BJ (cell line): ENCODE measurements at regions of chr10 and their contacts with region 1.

Region 1: DNA sequence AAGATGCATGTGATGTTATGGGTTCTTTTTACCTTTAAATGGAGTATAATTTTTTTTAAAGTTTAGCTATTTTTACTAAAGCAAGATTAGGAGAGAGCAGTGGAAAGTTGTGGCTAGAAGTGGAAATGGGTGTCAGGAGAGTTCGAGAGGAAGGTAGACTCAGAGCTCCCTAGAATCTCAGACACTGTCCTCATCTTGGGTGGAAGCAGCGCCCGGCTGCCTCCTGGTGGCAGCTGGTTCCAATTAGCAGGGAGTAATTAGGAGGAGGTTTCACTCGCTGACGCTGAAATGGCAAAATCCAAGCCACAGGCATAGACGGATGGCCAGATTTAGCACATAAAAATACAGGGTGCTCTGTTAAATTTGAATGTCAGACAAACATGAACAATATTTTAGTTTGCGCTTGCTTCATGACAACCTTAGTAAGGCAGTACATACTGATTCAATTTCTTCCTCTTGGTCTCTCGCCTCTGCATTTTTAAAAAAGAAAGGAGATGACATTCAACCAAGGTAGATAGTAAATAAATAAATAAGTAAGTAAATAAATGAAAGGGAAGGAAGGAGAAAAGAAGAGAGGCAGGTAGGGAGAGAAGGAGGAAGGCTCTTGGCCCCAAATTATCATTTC is 58.5 kb downstream of the LGI1 start:
- DNase-seq: peak; percentile 22
- H3K4me3 ChIP-seq: no peak overlapping the region
- H3K27me3 ChIP-seq: peaks cover 6% of the 10 kb centered on the region
- CTCF ChIP-seq: peak; percentile 72

Region 2: DNA sequence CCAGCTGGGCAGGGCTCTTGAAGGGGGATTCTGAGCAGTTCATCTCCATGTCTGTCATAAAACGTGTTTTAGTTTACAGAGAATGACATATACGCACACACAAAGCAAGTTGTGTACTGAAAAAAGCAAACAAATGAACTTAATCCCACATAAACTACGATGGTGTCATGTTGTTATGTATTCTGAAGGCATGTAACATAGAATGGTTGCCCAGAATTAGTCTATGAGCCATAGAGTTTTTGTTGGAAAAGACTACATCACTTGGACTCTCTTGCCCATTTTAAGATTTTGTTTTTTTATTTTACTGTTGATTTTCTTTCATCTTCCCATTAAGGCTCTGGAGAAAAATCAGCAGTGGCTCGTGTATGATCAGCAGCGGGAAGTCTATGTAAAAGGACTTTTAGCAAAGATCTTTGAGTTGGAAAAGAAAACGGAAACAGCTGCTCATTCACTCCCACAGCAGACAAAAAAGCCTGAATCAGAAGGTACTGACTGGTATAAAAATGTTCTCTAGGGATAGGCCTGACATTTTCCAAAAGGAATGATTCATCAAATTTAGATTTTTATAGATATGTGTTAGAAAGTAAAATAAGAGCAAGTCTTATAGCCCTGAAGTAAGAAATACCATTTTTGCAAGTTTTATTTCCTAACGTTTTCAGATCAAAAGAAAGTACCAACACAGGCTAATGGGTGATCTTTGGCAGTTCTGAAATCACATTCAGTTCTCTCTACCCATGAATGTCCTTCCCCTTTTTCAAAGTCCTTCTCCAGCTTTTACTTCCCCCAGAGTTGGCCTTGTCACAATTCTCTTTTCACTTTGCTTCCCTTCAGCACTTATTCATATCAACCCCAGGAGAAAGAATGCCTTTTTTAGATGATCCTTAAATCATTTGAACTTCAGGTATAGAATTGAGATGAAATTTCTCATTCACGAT is 300.9 kb before region 1 on chr10:
- CTCF ChIA-PET with region 1: no interaction called
- POLR2A ChIA-PET with region 1: no interaction called
- DNase-seq: no peak
- H3K4me3 ChIP-seq: no peak overlapping the region
- H3K27me3 ChIP-seq: no peaks in the 10 kb centered on the region
- CTCF ChIP-seq: no peak

Region 3: DNA sequence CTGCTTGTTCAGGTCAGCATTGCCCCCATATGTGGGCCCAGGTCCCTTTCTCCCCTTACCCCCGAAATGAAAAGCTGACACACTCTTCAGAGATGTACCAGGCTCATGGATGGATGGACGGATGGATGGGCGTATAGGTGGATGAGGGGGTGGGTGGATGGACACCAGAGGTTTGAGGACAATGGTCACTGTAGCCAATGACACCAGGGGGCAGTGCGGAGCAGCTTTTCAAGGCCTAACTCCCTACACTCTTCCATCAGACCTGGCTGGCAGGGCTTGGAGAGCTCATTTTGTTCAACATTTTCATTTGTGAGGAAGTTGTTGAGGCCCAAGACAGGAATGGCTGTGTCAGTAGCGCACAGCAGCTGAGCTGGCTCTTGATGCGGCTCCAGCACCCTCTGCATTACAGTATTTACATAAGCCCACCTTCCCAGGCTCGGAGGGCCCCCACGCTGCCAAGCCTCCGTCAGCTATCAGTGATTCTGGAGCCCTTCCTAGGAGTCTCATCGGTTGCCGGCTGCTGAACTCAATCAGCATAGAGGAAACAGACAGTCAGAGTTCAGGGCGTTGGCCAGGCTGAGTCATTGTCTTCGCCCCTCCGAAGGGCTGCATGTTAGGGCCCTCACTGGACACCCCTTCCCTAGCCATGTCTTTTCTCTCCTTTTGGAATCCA is 261.3 kb before region 1 on chr10:
- CTCF ChIA-PET with region 1: interaction called, 21 read pairs
- POLR2A ChIA-PET with region 1: no interaction called
- DNase-seq: no peak
- H3K4me3 ChIP-seq: no peak overlapping the region
- H3K27me3 ChIP-seq: no peaks in the 10 kb centered on the region; the same call in 1 of the 2 replicates
- CTCF ChIP-seq: peak; percentile 79

Region 4: GRCh38 chr10:93702211-93703001 is 113.8 kb before region 1 on chr10 and contains the start of gene FRA10AC1:
- CTCF ChIA-PET with region 1: interaction called, 21 read pairs
- POLR2A ChIA-PET with region 1: interaction called, 3 read pairs
- DNase-seq: no peak
- H3K4me3 ChIP-seq: peak within 1 kb of the TSS; percentile 50
- H3K27me3 ChIP-seq: no peaks in the 10 kb centered on the region; the same call in 1 of the 2 replicates
- CTCF ChIP-seq: peak; percentile 43
- polyA plus RNA-seq, gene FRA10AC1: 2.1 and 5.1 TPM in 2 replicates

Region 5: DNA sequence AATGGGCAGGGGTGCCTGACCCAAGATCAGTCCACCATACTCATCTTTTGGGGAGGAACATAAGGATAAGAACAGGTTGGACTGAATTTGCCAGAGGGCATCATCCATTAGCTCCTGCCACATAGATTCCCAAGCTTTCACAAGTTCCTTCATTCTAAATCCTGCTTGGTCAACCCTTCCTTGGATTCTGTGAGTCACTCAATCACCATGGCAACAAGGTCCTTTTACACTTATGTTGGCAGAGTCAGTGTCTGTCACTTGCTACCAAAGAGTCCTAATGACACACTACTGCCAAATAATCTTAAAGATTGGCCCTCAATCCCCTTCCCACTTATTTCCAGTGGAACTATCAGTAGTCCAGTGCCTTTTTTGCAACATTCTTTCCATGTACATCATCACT is 63.5 kb before region 1 on chr10:
- CTCF ChIA-PET with region 1: interaction called, 11 read pairs
- POLR2A ChIA-PET with region 1: no interaction called
- DNase-seq: peak; percentile 29
- H3K4me3 ChIP-seq: no peak overlapping the region
- H3K27me3 ChIP-seq: peaks cover 3% of the 10 kb centered on the region
- CTCF ChIP-seq: no peak

Region 6: DNA sequence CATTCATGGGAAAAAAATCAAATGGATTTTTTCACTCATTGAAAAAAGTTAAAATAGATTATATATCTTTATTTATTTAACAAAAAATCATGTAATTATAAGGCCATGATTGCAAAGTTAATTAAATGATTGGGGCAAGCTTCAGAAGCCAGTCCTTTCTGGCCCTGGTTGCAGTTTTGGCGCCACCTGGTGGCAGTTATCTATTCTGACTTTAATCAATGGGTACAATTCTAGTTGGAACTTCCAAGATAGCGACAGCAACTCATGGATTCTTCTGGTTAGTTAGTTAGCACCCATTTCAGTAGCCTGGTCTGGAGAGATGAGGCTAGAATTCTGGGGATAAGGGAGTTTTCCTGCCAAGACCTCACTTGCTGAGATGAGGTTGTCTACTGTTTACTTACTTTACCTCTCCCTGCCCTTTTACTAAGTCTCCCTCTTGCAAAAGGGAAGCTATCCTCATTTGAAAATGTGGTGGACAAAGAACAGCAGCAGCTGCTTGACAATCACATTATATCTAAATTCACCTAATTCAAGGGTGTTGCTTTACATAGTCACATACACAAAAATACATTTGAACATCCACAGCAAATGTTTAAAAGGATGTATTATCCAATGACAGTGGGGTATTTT is 504.2 kb after region 1 on chr10:
- CTCF ChIA-PET with region 1: interaction called, 10 read pairs
- POLR2A ChIA-PET with region 1: no interaction called
- DNase-seq: no peak
- H3K4me3 ChIP-seq: no peak overlapping the region
- H3K27me3 ChIP-seq: no peaks in the 10 kb centered on the region
- CTCF ChIP-seq: peak; percentile 75